Caco-2 (cell line): ENCODE measurements at regions of chr21 and their contacts with region 1.

Region 1: GRCh38 chr21:46138383-46138970 is 16.9 kb downstream of the FTCD start:
- DNase-seq: no peak
- H3K4me3 ChIP-seq: no peak overlapping the region
- H3K4me3 Mint-ChIP-seq: no peak overlapping the region
- H3K27ac Mint-ChIP-seq: no peak overlapping the region
- H3K4me1 ChIP-seq: no peaks in the 10 kb centered on the region
- H3K4me1 Mint-ChIP-seq: no peaks in the 10 kb centered on the region
- H3K27me3 ChIP-seq: no peaks in the 10 kb centered on the region
- H3K27me3 Mint-ChIP-seq: no peaks in the 10 kb centered on the region
- CTCF ChIP-seq: no peak

Region 2: DNA sequence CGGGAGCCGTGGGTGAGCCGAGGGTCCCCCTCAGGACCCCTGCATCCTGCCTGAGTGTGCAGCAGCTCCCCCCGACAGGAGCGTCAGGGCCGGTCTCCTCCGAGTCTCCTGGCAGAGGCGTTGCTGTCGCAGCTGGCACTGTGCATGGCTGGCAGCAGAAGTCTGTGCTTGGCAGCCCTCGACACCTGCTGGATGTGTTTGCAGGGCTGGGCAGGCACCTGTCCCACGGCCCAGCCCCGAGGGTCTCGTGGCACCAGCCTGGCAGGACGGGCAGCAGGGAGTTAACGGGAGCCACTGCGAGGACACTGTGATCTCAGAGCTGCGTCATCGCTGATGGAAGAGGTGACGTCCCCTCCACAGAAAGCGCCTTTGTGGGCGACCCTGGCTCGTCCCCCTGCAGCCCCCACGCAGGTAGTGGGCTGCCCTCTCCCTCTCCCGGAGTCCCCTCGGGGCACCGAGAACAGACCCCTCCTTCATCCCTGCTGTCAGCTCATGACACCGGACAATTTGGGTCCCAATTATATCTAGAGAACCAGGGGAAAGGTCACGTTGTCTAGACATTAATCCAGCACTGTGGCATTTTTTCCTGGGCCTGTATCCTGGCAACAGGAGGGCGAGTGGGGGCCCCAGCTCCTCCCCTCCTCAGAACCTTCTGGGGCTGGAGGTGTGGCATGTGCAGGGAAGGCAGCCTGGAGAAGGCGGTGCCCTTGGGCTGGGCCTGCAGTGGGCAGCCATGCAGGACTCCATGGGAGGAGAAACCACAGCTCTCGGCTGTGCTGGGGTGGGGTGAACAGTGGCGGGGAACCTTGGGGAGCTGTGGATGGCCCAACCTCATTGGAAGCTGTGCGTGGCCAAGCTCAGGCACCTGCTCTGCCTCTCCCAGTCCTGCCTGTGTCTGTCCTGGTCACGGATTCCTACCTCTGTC is 718.2 kb before region 1 on chr21:
- CTCF ChIA-PET with region 1: no interaction called
- POLR2A ChIA-PET with region 1: no interaction called
- intact Hi-C with region 1: no loop called
- DNase-seq: peak in 1 of 2 experiments; percentile 55
- H3K4me3 ChIP-seq: no peak overlapping the region
- H3K4me3 Mint-ChIP-seq: no peak overlapping the region
- H3K27ac Mint-ChIP-seq: peak overlapping the region; percentile 48
- H3K4me1 ChIP-seq: peaks cover 27% of the 10 kb centered on the region
- H3K4me1 Mint-ChIP-seq: peaks cover 19% of the 10 kb centered on the region
- H3K27me3 ChIP-seq: no peaks in the 10 kb centered on the region
- H3K27me3 Mint-ChIP-seq: no peaks in the 10 kb centered on the region
- CTCF ChIP-seq: no peak

Region 3: GRCh38 chr21:46124926-46125855 is 13.3 kb before region 1 on chr21:
- CTCF ChIA-PET with region 1: interaction called, 7 read pairs
- POLR2A ChIA-PET with region 1: no interaction called
- intact Hi-C with region 1: loop called (anchors 2 kb)
- DNase-seq: peak in 1 of 2 experiments; percentile 29
- H3K4me3 ChIP-seq: no peak overlapping the region
- H3K4me3 Mint-ChIP-seq: no peak overlapping the region
- H3K27ac Mint-ChIP-seq: no peak overlapping the region
- H3K4me1 ChIP-seq: no peaks in the 10 kb centered on the region
- H3K4me1 Mint-ChIP-seq: no peaks in the 10 kb centered on the region
- H3K27me3 ChIP-seq: no peaks in the 10 kb centered on the region
- H3K27me3 Mint-ChIP-seq: no peaks in the 10 kb centered on the region
- CTCF ChIP-seq: no peak